T-cell (primary cell): ENCODE measurements at regions of chr4 and their contacts with region 1.

Region 1: DNA sequence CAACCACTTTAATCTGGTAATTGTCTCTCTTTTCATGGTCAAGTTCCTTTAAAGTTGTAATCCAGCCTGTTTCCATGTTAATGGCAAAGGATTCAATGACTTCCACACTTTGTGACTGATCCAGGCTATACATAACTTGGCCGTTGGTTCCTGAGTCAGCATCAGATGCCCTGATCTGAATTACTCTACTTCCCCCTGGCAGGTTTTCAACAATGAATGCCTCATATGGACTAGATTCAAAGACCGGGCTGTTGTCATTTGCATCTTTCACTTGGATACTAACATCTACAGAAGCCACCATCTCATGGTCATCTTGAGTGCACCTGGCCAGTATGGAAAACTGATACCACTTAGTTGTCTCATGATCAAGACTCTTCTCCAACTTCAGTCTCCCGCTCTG is 62.6 kb upstream of the MTNR1A start:
- DNase-seq: no peak
- ATAC-seq: no peak
- H3K4me3 ChIP-seq: no peak overlapping the region
- H3K4me3 Mint-ChIP-seq: no peak overlapping the region
- H3K27ac ChIP-seq: no peak overlapping the region
- H3K27ac Mint-ChIP-seq: no peak overlapping the region
- H3K4me1 ChIP-seq: no peaks in the 10 kb centered on the region
- H3K4me1 Mint-ChIP-seq: no peaks in the 10 kb centered on the region
- H3K27me3 ChIP-seq: no peaks in the 10 kb centered on the region
- H3K27me3 Mint-ChIP-seq: peaks cover 0 to 8% of the 10 kb centered on the region in 2 donors

Region 2: DNA sequence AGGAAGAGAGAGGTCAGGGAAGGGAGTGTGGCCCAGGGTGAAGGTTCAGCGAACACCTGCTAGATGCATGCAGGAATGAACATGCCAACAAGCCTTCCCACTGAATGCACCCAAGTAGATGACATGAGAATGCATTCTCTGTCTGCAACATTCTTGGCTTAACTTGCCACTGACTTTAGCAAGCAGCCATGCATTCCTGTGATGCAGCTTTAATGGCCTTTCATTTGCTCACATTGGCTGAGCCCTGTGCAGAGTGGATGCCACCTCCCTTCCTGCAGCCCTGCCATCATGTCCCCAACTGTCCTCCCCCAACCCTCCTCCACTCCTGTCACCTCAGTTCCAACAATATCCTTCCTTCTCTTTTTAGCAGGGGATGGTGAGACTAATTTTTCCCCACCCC is 37.3 kb before region 1 on chr4:
- CTCF ChIA-PET with region 1: interaction called in 1 of 2 experiments, 10 read pairs
- POLR2A ChIA-PET with region 1: no interaction called
- DNase-seq: no peak
- ATAC-seq: no peak
- H3K4me3 ChIP-seq: no peak overlapping the region
- H3K4me3 Mint-ChIP-seq: no peak overlapping the region
- H3K27ac ChIP-seq: no peak overlapping the region
- H3K27ac Mint-ChIP-seq: no peak overlapping the region
- H3K4me1 ChIP-seq: no peaks in the 10 kb centered on the region
- H3K4me1 Mint-ChIP-seq: no peaks in the 10 kb centered on the region
- H3K27me3 ChIP-seq: no peaks in the 10 kb centered on the region
- H3K27me3 Mint-ChIP-seq: no peaks in the 10 kb centered on the region

Region 3: DNA sequence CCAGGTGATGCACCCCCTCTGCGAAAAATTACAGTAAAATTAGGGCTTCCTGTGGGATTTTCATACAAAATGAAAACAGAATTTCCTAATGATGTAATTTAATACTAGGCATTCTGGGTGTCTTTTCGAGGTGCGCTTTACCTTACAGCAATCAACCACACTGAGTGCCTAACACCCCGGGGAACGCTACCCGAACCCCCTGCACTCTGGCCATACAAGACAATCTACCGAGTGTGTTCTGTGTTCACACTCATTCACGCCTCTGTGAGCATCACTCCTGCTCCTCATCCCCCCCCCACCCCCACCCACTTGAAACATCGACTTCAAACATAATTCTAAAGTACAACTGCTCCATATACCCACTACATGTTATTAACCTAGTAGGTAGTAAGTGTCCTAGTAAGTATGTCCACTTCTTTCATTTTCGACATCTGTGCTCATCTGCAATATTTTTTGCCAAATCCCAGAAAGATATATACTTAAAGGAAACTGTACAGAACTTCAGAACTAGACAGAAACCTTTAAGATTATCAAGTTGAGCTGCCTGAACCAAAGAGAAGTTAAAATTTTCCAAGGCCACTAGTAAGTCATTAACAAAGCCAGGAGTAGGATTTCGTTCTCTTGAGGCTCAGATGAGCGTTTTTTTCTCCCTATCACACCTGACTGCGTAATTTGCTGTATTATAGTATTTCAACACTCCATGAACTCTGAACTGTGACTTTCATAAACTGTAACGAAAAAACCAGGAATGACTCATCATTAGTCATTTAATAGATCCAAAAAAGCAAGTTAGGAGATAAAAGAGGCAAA is 25.8 kb after region 1 on chr4:
- CTCF ChIA-PET with region 1: no interaction called
- POLR2A ChIA-PET with region 1: no interaction called
- DNase-seq: no peak
- ATAC-seq: no peak
- H3K4me3 ChIP-seq: no peak overlapping the region
- H3K4me3 Mint-ChIP-seq: no peak overlapping the region
- H3K27ac ChIP-seq: no peak overlapping the region
- H3K27ac Mint-ChIP-seq: no peak overlapping the region
- H3K4me1 ChIP-seq: no peaks in the 10 kb centered on the region
- H3K4me1 Mint-ChIP-seq: no peaks in the 10 kb centered on the region
- H3K27me3 ChIP-seq: no peaks in the 10 kb centered on the region
- H3K27me3 Mint-ChIP-seq: no peaks in the 10 kb centered on the region